ENCODE measurements at regions of chr2 and their contacts with region 1.

Region 1: DNA sequence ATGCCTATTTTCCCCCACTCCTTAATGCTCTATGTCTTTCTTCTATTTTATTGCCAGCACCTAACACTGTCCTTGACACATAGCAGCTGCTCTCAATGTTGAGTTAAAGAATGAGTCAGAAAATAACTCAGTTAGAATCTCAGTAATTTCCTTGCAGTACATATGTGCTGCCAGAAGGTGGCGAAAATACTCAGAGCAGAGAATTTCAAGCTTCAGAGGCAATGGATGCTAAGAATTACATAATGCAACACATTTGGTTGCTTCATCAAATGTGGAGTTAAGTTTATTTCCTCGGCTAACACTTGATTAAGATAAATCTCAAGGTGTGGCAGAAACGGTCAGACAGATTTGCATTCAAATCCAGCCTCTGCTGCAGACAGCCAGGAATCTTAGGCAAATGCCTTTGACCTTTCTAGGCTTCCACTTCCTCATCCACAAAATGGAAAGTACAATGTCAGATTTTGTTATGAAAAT is 105.6 kb downstream of the VSNL1 start:
- DNase-seq: peak in 4 of 5 donors; percentile 27 to 44 (median 32)
- H3K4me3 ChIP-seq: no peak overlapping the region
- H3K4me3 Mint-ChIP-seq: no peak overlapping the region
- H3K27ac ChIP-seq: no peak overlapping the region
- H3K27ac Mint-ChIP-seq: no peak overlapping the region
- H3K4me1 ChIP-seq: no peaks in the 10 kb centered on the region
- H3K4me1 Mint-ChIP-seq: no peaks in the 10 kb centered on the region
- H3K27me3 ChIP-seq: no peaks in the 10 kb centered on the region
- H3K27me3 Mint-ChIP-seq: no peaks in the 10 kb centered on the region

Region 2: GRCh38 chr2:17429130-17429529 is 217.0 kb before region 1 on chr2:
- CTCF ChIA-PET with region 1: no interaction called
- POLR2A ChIA-PET with region 1: no interaction called
- intact Hi-C with region 1: no loop called
- DNase-seq: no peak
- H3K4me3 ChIP-seq: no peak overlapping the region
- H3K4me3 Mint-ChIP-seq: no peak overlapping the region
- H3K27ac ChIP-seq: no peak overlapping the region
- H3K27ac Mint-ChIP-seq: no peak overlapping the region
- H3K4me1 ChIP-seq: no peaks in the 10 kb centered on the region
- H3K4me1 Mint-ChIP-seq: no peaks in the 10 kb centered on the region
- H3K27me3 ChIP-seq: no peaks in the 10 kb centered on the region
- H3K27me3 Mint-ChIP-seq: no peaks in the 10 kb centered on the region

Region 3: DNA sequence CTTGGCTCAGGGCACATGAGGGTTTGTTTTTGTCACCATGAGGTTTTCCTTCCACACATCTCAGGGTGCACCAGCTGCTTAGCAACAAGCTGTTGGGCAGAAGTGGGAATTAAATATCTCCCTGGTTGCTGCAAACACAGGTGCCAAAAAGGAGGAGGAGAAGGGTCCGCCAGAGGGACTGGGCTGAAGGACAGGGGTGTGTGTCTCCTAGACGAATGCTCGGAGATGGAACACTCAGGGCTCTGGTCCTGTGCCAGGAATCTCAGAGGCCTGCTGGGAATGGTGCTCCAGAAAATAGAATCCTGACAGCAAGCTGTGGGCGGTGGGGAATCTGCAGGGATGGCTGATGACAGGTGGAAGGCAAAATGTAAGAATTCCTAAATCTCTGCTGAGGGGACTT is 11.1 kb before region 1 on chr2:
- CTCF ChIA-PET with region 1: interaction called, 11 read pairs
- POLR2A ChIA-PET with region 1: no interaction called
- intact Hi-C with region 1: no loop called
- DNase-seq: no peak
- H3K4me3 ChIP-seq: no peak overlapping the region
- H3K4me3 Mint-ChIP-seq: no peak overlapping the region
- H3K27ac ChIP-seq: no peak overlapping the region
- H3K27ac Mint-ChIP-seq: no peak overlapping the region
- H3K4me1 ChIP-seq: no peaks in the 10 kb centered on the region
- H3K4me1 Mint-ChIP-seq: no peaks in the 10 kb centered on the region
- H3K27me3 ChIP-seq: no peaks in the 10 kb centered on the region
- H3K27me3 Mint-ChIP-seq: peaks cover 1% of the 10 kb centered on the region in 2 donors

Region 4: GRCh38 chr2:17658251-17658843 is 12.2 kb after region 1 on chr2:
- CTCF ChIA-PET with region 1: interaction called, 33 read pairs
- POLR2A ChIA-PET with region 1: no interaction called
- intact Hi-C with region 1: no loop called
- DNase-seq: no peak
- H3K4me3 ChIP-seq: no peak overlapping the region
- H3K4me3 Mint-ChIP-seq: no peak overlapping the region
- H3K27ac ChIP-seq: no peak overlapping the region
- H3K27ac Mint-ChIP-seq: peak overlapping the region in 1 of 7 donors; percentile 14
- H3K4me1 ChIP-seq: no peaks in the 10 kb centered on the region
- H3K4me1 Mint-ChIP-seq: peaks cover 0 to 3% (median 0%) of the 10 kb centered on the region in 4 donors
- H3K27me3 ChIP-seq: no peaks in the 10 kb centered on the region
- H3K27me3 Mint-ChIP-seq: no peaks in the 10 kb centered on the region

Region 5: GRCh38 chr2:17664534-17664933 is 18.4 kb after region 1 on chr2:
- CTCF ChIA-PET with region 1: interaction called, 142 read pairs
- POLR2A ChIA-PET with region 1: no interaction called
- intact Hi-C with region 1: no loop called
- DNase-seq: no peak
- H3K4me3 ChIP-seq: no peak overlapping the region
- H3K4me3 Mint-ChIP-seq: no peak overlapping the region
- H3K27ac ChIP-seq: no peak overlapping the region
- H3K27ac Mint-ChIP-seq: no peak overlapping the region
- H3K4me1 ChIP-seq: no peaks in the 10 kb centered on the region
- H3K4me1 Mint-ChIP-seq: peaks cover 0 to 2% (median 0%) of the 10 kb centered on the region in 4 donors
- H3K27me3 ChIP-seq: no peaks in the 10 kb centered on the region
- H3K27me3 Mint-ChIP-seq: no peaks in the 10 kb centered on the region

Region 6: GRCh38 chr2:17672583-17673317 is 26.6 kb after region 1 on chr2:
- CTCF ChIA-PET with region 1: interaction called, 142 read pairs
- POLR2A ChIA-PET with region 1: interaction called, 5 read pairs
- intact Hi-C with region 1: loop called (anchors 1 kb)
- DNase-seq: no peak
- H3K4me3 ChIP-seq: no peak overlapping the region
- H3K4me3 Mint-ChIP-seq: no peak overlapping the region
- H3K27ac ChIP-seq: no peak overlapping the region
- H3K27ac Mint-ChIP-seq: peak overlapping the region in 2 of 7 donors; percentile 29 to 45
- H3K4me1 ChIP-seq: no peaks in the 10 kb centered on the region
- H3K4me1 Mint-ChIP-seq: peaks cover 0 to 4% (median 1%) of the 10 kb centered on the region in 4 donors
- H3K27me3 ChIP-seq: no peaks in the 10 kb centered on the region
- H3K27me3 Mint-ChIP-seq: no peaks in the 10 kb centered on the region

Region 7: GRCh38 chr2:18332477-18332876 is 686.4 kb after region 1 on chr2:
- CTCF ChIA-PET with region 1: no interaction called
- POLR2A ChIA-PET with region 1: no interaction called
- intact Hi-C with region 1: no loop called
- DNase-seq: no peak
- H3K4me3 ChIP-seq: no peak overlapping the region
- H3K4me3 Mint-ChIP-seq: no peak overlapping the region
- H3K27ac ChIP-seq: no peak overlapping the region
- H3K27ac Mint-ChIP-seq: no peak overlapping the region
- H3K4me1 ChIP-seq: no peaks in the 10 kb centered on the region
- H3K4me1 Mint-ChIP-seq: no peaks in the 10 kb centered on the region
- H3K27me3 ChIP-seq: peaks cover 4% of the 10 kb centered on the region
- H3K27me3 Mint-ChIP-seq: peaks cover 3 to 7% of the 10 kb centered on the region in 2 donors

Measured in CD4-positive, alpha-beta memory T cell (primary cell).